ENCODE measurements at regions of chr1 and their contacts with region 1.

Region 1: DNA sequence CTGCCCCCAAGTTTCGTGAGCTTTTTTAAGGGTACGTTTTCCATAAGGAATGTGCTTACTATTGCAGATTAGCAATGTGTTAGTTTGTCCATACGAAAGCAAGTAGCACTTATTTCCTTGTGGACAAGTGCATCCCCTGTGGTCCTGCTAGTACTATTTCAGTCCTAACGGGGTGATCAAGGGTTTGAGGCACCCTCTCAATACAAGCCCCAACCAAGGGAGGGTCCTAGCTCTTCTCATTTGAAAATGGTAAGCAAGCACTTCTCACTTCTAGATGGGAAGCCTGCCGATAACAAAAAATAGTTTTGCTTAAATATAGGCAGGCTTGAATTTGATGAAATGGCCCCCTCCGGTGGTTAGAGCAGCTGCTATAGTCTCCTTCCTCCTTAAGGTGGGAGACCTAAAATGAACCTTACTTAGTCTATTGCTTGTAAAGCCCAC is 64.0 kb upstream of the HMCN1 start:
- DNase-seq: no peak
- ATAC-seq: peak; percentile 81
- H3K4me3 Mint-ChIP-seq: no peak overlapping the region
- H3K27ac Mint-ChIP-seq: peak overlapping the region; percentile 43
- H3K4me1 Mint-ChIP-seq: peaks cover 33% of the 10 kb centered on the region
- H3K27me3 Mint-ChIP-seq: no peaks in the 10 kb centered on the region
- CTCF ChIP-seq: no peak

Region 2: GRCh38 chr1:185156854-185157598 is 513.2 kb before region 1 on chr1 and contains the starts of genes SWT1 and TRMT1L:
- CTCF ChIA-PET with region 1: interaction called, 4 read pairs
- POLR2A ChIA-PET with region 1: no interaction called
- intact Hi-C with region 1: loop called (anchors 2 kb)
- DNase-seq: peak; percentile 97
- ATAC-seq: peak; percentile 85
- H3K4me3 Mint-ChIP-seq: peak within 1 kb of the TSS; percentile 99
- H3K27ac Mint-ChIP-seq: peak within 1 kb of the TSS; percentile 100
- H3K4me1 Mint-ChIP-seq: peaks cover 50% of the 10 kb centered on the region
- H3K27me3 Mint-ChIP-seq: no peaks in the 10 kb centered on the region
- CTCF ChIP-seq: no peak
- total RNA-seq, gene SWT1: 4.9 and 5.5 TPM in 2 replicates
- total RNA-seq, gene TRMT1L: 20.0 and 23.9 TPM in 2 replicates

Region 3: GRCh38 chr1:185409763-185410528 is 260.3 kb before region 1 on chr1:
- CTCF ChIA-PET with region 1: no interaction called
- POLR2A ChIA-PET with region 1: interaction called, 3 read pairs
- intact Hi-C with region 1: loop called (anchors 5 kb)
- DNase-seq: no peak
- ATAC-seq: no peak
- H3K4me3 Mint-ChIP-seq: no peak overlapping the region
- H3K27ac Mint-ChIP-seq: no peak overlapping the region
- H3K4me1 Mint-ChIP-seq: peaks cover 57% of the 10 kb centered on the region
- H3K27me3 Mint-ChIP-seq: no peaks in the 10 kb centered on the region
- CTCF ChIP-seq: no peak

Region 4: GRCh38 chr1:185595835-185596667 is 74.2 kb before region 1 on chr1:
- CTCF ChIA-PET with region 1: interaction called, 42 read pairs
- POLR2A ChIA-PET with region 1: interaction called, 5 read pairs
- intact Hi-C with region 1: loop called (anchors 1 kb)
- DNase-seq: no peak
- ATAC-seq: peak; percentile 73
- H3K4me3 Mint-ChIP-seq: no peak overlapping the region
- H3K27ac Mint-ChIP-seq: peak overlapping the region; percentile 26
- H3K4me1 Mint-ChIP-seq: peaks cover 38% of the 10 kb centered on the region
- H3K27me3 Mint-ChIP-seq: no peaks in the 10 kb centered on the region
- CTCF ChIP-seq: peak; percentile 55

Region 5: DNA sequence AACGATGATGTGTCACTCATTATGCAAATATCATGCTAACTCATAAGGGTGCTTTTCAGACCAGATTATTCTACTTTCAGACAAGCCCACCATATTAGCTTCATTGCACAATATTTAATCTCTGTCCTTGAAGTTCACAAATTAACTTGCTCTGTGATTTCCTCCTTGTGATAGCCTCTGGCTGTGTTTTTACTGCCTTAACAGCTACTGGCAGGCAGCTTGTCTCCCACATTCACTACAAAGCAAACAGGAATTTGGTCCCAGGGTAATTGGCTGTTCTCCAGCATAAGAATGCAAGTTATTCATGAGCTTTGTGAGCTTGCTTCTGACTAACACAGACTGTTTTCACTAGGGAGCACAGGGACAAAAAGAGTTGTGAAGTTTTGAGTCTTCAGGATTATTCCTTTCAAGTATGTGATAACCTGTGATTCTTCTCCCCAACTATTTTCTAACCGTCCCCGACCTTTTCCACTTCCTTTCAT is 24.0 kb before region 1 on chr1:
- CTCF ChIA-PET with region 1: interaction called, 12 read pairs
- POLR2A ChIA-PET with region 1: no interaction called
- intact Hi-C with region 1: no loop called
- DNase-seq: no peak
- ATAC-seq: no peak
- H3K4me3 Mint-ChIP-seq: no peak overlapping the region
- H3K27ac Mint-ChIP-seq: no peak overlapping the region
- H3K4me1 Mint-ChIP-seq: peaks cover 16% of the 10 kb centered on the region
- H3K27me3 Mint-ChIP-seq: no peaks in the 10 kb centered on the region
- CTCF ChIP-seq: no peak

Region 6: GRCh38 chr1:185694081-185694480 is 23.9 kb after region 1 on chr1:
- CTCF ChIA-PET with region 1: interaction called, 11 read pairs
- POLR2A ChIA-PET with region 1: interaction called, 4 read pairs
- intact Hi-C with region 1: no loop called
- DNase-seq: no peak
- ATAC-seq: peak; percentile 82
- H3K4me3 Mint-ChIP-seq: peak overlapping the region; percentile 86
- H3K27ac Mint-ChIP-seq: peak overlapping the region; percentile 98
- H3K4me1 Mint-ChIP-seq: peaks cover 22% of the 10 kb centered on the region
- H3K27me3 Mint-ChIP-seq: peaks cover 9% of the 10 kb centered on the region
- CTCF ChIP-seq: no peak

Region 7: GRCh38 chr1:185759061-185759460 is 88.9 kb after region 1 on chr1:
- CTCF ChIA-PET with region 1: no interaction called
- POLR2A ChIA-PET with region 1: no interaction called
- intact Hi-C with region 1: no loop called
- DNase-seq: no peak
- ATAC-seq: no peak
- H3K4me3 Mint-ChIP-seq: no peak overlapping the region
- H3K27ac Mint-ChIP-seq: no peak overlapping the region
- H3K4me1 Mint-ChIP-seq: no peaks in the 10 kb centered on the region
- H3K27me3 Mint-ChIP-seq: peaks cover 20% of the 10 kb centered on the region
- CTCF ChIP-seq: no peak

Measured in activated B cell treated with CpG ODN at 0.5 μM for 24 hours (primary cell).